ENCODE measurements at regions of chr10 and their contacts with region 1.

Region 1: GRCh38 chr10:131885391-131886161 is 15.2 kb upstream of the PPP2R2D start:
- DNase-seq: peak; percentile 71 to 78
- H3K4me3 ChIP-seq: no peak overlapping the region
- H3K27ac ChIP-seq: no peak overlapping the region
- H3K4me1 ChIP-seq: peaks cover 0 to 8% of the 10 kb centered on the region in 2 donors
- H3K27me3 ChIP-seq: no peaks in the 10 kb centered on the region
- CTCF ChIP-seq: peak; percentile 82 to 98 (median 92)
- POLR2A ChIP-seq: no peak

Region 2: GRCh38 chr10:132023092-132023811 is 137.7 kb after region 1 on chr10:
- intact Hi-C with region 1: loop called (anchors 2 kb)
- DNase-seq: peak; percentile 78 to 86
- H3K4me3 ChIP-seq: no peak overlapping the region
- H3K27ac ChIP-seq: no peak overlapping the region
- H3K4me1 ChIP-seq: peaks cover 0 to 11% of the 10 kb centered on the region in 2 donors
- H3K27me3 ChIP-seq: no peaks in the 10 kb centered on the region
- CTCF ChIP-seq: peak; percentile 60 to 94 (median 86)
- POLR2A ChIP-seq: no peak

Region 3: GRCh38 chr10:132142411-132143161 is 257.0 kb after region 1 on chr10:
- intact Hi-C with region 1: loop called (anchors 5 kb)
- DNase-seq: peak; percentile 41 to 46
- H3K4me3 ChIP-seq: no peak overlapping the region
- H3K27ac ChIP-seq: no peak overlapping the region
- H3K4me1 ChIP-seq: no peaks in the 10 kb centered on the region
- H3K27me3 ChIP-seq: no peaks in the 10 kb centered on the region
- CTCF ChIP-seq: peak in 5 of 6 experiments; percentile 50 to 91 (median 69)
- POLR2A ChIP-seq: no peak